ENCODE measurements at regions of chr3 and their contacts with region 1.

Region 1: DNA sequence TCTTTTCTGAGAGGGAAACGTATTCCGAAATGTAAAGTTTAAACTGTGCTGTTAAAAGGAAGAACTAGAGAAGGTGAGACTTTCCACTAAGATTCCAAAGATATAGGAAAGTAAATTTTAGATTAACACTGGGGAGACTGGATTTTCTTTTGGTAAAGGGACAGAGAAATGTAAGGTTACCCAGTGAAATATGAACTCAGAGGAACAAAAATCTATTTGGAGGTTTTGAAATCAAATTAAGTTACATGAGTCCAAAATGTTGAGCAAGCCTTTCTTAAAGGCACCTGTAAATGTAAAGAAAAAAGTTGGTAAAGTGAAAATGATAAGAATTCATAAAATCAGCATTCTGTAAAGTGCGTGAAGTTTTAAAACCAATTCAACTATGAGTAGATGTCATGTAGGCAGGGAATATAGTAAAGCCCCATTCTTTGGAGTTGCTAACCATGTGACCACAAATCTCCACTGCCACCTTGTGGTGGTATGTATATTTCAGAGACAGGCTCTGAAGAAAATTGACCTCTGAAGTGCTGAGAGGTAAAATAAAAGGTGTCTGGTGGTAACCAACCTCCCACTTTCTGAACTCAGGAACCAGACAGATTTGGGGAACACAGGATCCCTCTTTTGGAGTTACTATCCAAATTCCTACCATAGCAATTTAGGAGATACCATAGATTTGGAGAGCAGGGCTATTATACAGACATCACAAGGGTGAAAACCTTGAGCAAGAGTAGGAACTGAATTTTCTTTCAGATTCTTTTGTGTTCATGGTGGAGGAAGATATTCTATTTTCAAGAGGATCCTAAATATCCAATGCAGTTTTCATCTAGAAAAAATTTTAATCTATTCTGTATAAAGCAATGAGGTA is 215.3 kb downstream of the ROBO2 start:
- DNase-seq: peak; percentile 40 to 87
- H3K4me3 ChIP-seq: no peak overlapping the region
- H3K27ac ChIP-seq: no peak overlapping the region
- H3K4me1 ChIP-seq: no peaks in the 10 kb centered on the region
- H3K27me3 ChIP-seq: no peaks in the 10 kb centered on the region
- CTCF ChIP-seq: peak in 5 of 7 experiments; percentile 55 to 74 (median 69)
- EP300 ChIP-seq: no peak
- POLR2A ChIP-seq: no peak

Region 2: DNA sequence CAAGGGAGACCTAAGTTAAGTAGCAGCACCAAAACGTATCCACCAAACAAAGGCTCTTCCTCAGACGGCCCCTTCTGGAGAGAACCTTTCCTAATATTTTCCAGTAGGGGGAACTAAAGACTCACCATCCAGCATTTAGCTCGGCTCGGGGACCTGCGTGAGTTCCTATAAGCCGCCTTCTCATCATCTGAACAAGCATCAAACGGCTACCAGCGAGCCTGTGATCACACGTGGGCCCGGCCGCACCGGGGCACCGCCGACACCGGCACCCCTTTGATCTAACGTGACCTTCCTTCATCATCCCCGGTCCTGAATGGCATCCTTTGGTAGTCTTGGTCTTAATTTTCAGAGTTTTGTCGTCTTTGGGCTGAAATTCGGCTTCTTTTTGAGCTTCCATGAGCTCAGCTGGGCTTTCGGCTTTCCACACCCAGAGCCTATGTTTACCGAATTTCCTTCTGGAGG is 216.7 kb before region 1 on chr3:
- intact Hi-C with region 1: loop called (anchors 5 kb)
- DNase-seq: peak; percentile 70 to 94
- H3K4me3 ChIP-seq: peak overlapping the region; percentile 47 to 61 (median 48)
- H3K27ac ChIP-seq: peak overlapping the region in 1 of 5 donors; percentile 20
- H3K4me1 ChIP-seq: peaks cover 15 to 27% (median 22%) of the 10 kb centered on the region in 4 donors
- H3K27me3 ChIP-seq: peaks cover 0 to 65% (median 21%) of the 10 kb centered on the region in 3 donors
- CTCF ChIP-seq: peak in 5 of 7 experiments; percentile 39 to 68 (median 49)
- EP300 ChIP-seq: no peak
- POLR2A ChIP-seq: no peak